Esophagus muscularis mucosa (tissue), 4 donors: ENCODE measurements at regions of chr4 and their contacts with region 1.

Region 1: GRCh38 chr4:158172261-158173258 is at the start of gene GASK1B:
- DNase-seq: no peak
- H3K4me3 ChIP-seq: peak within 1 kb of the TSS; percentile 52 to 56 (median 54)
- H3K27ac ChIP-seq: peak within 1 kb of the TSS; percentile 58 to 79 (median 74)
- H3K4me1 ChIP-seq: peaks cover 24 to 48% (median 34%) of the 10 kb centered on the region in 4 donors
- H3K27me3 ChIP-seq: no peaks in the 10 kb centered on the region
- CTCF ChIP-seq: peak; percentile 65 to 69 (median 65)
- EP300 ChIP-seq: no peak
- POLR2A ChIP-seq: no peak
- total RNA-seq, gene GASK1B: 27.5 to 45.9 (median 32.4) TPM

Region 2: DNA sequence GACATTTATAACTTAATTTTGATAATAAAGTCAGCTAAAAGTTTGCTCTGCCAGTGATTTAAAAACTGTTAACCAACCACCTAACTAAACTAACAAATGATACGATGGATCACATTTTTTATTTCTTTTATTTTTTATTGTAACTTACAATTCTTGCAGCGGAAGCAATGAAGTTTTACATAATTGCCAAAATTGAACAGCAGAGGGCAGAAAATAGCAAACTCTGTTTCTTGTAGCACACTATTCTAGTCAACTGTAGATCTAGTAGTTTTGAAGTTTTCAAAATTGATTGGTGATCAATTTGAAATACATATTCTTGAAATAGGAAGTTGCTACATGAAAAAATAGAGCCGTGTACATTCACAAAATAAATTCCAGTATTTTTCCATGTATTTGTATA is 954.9 kb before region 1 on chr4:
- intact Hi-C with region 1: loop called (anchors 10 kb)
- DNase-seq: no peak
- H3K4me3 ChIP-seq: no peak overlapping the region
- H3K27ac ChIP-seq: no peak overlapping the region
- H3K4me1 ChIP-seq: peaks cover 0 to 23% (median 21%) of the 10 kb centered on the region in 4 donors
- H3K27me3 ChIP-seq: peaks cover 0 to 48% (median 28%) of the 10 kb centered on the region in 4 donors
- CTCF ChIP-seq: peak in 2 of 3 experiments; percentile 18 to 34
- EP300 ChIP-seq: no peak
- POLR2A ChIP-seq: no peak

Region 3: GRCh38 chr4:157992038-157992705 is 180.4 kb before region 1 on chr4:
- intact Hi-C with region 1: loop called (anchors 2 kb)
- DNase-seq: no peak
- H3K4me3 ChIP-seq: peak overlapping the region; percentile 32 to 52 (median 37)
- H3K27ac ChIP-seq: peak overlapping the region in 3 of 4 donors; percentile 22 to 67 (median 49)
- H3K4me1 ChIP-seq: peaks cover 0 to 13% (median 8%) of the 10 kb centered on the region in 4 donors
- H3K27me3 ChIP-seq: no peaks in the 10 kb centered on the region
- CTCF ChIP-seq: peak; percentile 68 to 74 (median 74)
- EP300 ChIP-seq: no peak
- POLR2A ChIP-seq: no peak